AG04450 (cell line): ENCODE measurements at regions of chr6 and their contacts with region 1.

Region 1: GRCh38 chr6:148947621-148948444 is 201.0 kb downstream of the UST start:
- DNase-seq: peak; percentile 70
- H3K4me3 ChIP-seq: no peak overlapping the region
- H3K27ac ChIP-seq: no peak overlapping the region
- H3K27me3 ChIP-seq: no peaks in the 10 kb centered on the region
- CTCF ChIP-seq: peak; percentile 87

Region 2: GRCh38 chr6:148854096-148854495 is 93.7 kb before region 1 on chr6:
- CTCF ChIA-PET with region 1: no interaction called
- POLR2A ChIA-PET with region 1: no interaction called
- DNase-seq: no peak
- H3K4me3 ChIP-seq: no peak overlapping the region
- H3K27ac ChIP-seq: no peak overlapping the region
- H3K27me3 ChIP-seq: no peaks in the 10 kb centered on the region
- CTCF ChIP-seq: no peak

Region 3: GRCh38 chr6:148959004-148959403 is 11.2 kb after region 1 on chr6:
- CTCF ChIA-PET with region 1: interaction called, 12 read pairs
- POLR2A ChIA-PET with region 1: no interaction called
- DNase-seq: no peak
- H3K4me3 ChIP-seq: no peak overlapping the region
- H3K27ac ChIP-seq: no peak overlapping the region
- H3K27me3 ChIP-seq: no peaks in the 10 kb centered on the region
- CTCF ChIP-seq: no peak